SK-N-SH (cell line): ENCODE measurements at regions of chr19 and their contacts with region 1.

Region 1: DNA sequence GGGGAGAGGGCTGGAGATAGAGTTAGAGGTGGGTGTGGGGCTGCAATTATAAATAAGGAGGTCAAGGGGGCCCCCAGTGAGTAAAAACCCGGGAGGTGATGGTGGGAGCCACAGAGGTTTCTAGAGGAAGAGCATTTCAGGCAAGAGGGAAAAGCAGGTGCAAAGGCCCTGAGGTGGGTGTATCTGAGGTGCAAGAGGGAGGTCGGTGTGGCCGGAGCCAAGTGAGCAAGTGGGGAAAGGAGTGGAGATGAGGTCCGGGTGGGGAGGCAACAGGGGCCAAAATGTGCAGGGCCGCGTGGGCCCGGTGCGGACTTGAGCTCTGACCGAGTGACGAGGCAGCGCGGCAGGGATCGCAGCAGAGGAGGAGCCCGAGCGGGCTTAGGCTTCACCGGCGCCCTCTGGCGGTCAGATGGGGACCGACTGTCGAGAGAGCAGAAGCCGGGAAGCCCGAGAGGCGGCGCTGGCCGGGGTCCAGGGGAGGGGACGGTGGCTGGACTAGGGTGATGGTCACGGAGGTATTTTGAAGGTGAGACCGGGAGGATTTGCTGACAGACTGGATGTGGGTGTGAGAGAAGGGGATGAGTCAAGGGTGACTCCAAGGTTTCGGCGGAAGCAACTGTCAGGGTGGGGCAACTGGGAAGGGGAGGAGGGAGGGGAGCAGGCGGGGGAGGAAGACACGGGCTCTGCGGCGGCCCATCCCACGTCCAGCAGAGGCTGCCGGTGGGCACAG is 17.7 kb upstream of the SPACA4 start:
- DNase-seq: peak; percentile 92
- H3K4me3 ChIP-seq: peak overlapping the region; percentile 40 to 60
- H3K27ac ChIP-seq: no peak overlapping the region
- H3K4me1 ChIP-seq: no peaks in the 10 kb centered on the region; a peak in 1 of 4 replicates
- H3K27me3 ChIP-seq: no peaks in the 10 kb centered on the region
- CTCF ChIP-seq: peak; percentile 95
- EP300 ChIP-seq: no peak
- RAD21 ChIP-seq: peak; percentile 59

Region 2: GRCh38 chr19:48492925-48493717 is 95.7 kb before region 1 on chr19:
- CTCF ChIA-PET with region 1: interaction called, 230 read pairs
- POLR2A ChIA-PET with region 1: interaction called, 5 read pairs
- DNase-seq: peak; percentile 99
- H3K4me3 ChIP-seq: peak overlapping the region; percentile 58 to 61
- H3K27ac ChIP-seq: peak overlapping the region; percentile 68 to 78
- H3K4me1 ChIP-seq: peaks cover 13 to 14% of the 10 kb centered on the region in 2 experiments; a peak in 3 of 4 replicates
- H3K27me3 ChIP-seq: no peaks in the 10 kb centered on the region
- CTCF ChIP-seq: no peak
- EP300 ChIP-seq: no peak
- RAD21 ChIP-seq: no peak

Region 3: DNA sequence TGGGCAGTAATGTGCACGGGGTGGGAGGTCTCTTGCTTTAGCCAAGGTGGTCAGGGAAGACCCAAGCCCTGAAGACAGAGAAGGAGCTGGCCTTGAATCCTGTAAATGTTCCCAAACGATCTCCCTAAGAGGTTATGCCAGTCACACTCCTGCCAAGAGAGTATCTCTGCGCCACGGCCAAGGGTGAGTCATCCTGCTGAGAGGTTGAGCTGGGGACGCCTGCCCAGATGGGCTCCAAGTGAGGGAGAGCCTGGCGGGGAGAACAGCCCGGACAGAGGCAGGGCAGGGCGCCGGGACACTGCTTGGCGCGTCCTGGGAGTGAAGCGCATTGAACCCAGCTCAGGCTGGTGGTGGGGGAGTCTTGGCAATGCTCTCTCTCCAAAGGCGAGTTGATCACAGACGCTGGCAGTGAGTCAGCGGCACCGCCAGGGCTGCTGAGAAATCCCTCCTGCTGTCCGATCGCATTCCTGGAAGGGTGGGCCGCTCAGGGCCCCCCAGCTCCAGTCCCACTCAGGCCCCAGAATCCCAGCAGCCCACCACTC is 20.4 kb before region 1 on chr19:
- CTCF ChIA-PET with region 1: interaction called, 19 read pairs
- POLR2A ChIA-PET with region 1: no interaction called
- DNase-seq: peak; percentile 68
- H3K4me3 ChIP-seq: no peak overlapping the region
- H3K27ac ChIP-seq: peak overlapping the region; percentile 45 to 98; a peak in 3 of 4 replicates
- H3K4me1 ChIP-seq: peaks cover 7 to 13% of the 10 kb centered on the region in 2 experiments; a peak in 3 of 4 replicates
- H3K27me3 ChIP-seq: no peaks in the 10 kb centered on the region
- CTCF ChIP-seq: no peak
- EP300 ChIP-seq: peak in 1 of 2 experiments; percentile 57; a peak in 1 of 4 replicates
- RAD21 ChIP-seq: no peak

Region 4: DNA sequence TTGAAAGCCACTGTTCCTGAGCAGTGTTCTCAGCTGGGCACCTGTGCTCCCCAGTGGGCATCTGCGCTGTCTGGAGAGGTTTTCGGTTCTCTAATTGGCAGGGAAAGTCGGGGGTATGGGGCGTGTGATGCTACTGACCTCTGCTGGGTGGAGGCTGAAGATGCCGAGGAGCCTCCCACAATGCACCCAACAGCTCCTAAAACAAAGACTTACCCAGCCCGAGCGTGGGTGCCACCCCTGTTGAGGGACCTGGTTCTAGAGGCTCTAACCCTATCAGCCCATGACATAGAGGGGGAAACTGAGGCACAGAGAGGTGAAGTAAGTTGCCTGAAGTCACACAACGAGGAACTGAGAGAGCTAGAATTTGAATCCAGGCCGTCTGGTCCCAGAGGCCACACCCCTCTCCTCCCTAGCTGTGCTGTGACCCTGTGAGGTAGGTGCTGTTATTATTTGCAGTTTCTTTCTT is 20.0 kb after region 1 on chr19:
- CTCF ChIA-PET with region 1: interaction called, 72 read pairs
- POLR2A ChIA-PET with region 1: interaction called, 3 read pairs
- DNase-seq: peak; percentile 86
- H3K4me3 ChIP-seq: no peak overlapping the region
- H3K27ac ChIP-seq: no peak overlapping the region
- H3K4me1 ChIP-seq: peaks cover 0 to 5% of the 10 kb centered on the region in 2 experiments; a peak in 1 of 4 replicates
- H3K27me3 ChIP-seq: no peaks in the 10 kb centered on the region
- CTCF ChIP-seq: peak; percentile 64
- EP300 ChIP-seq: no peak
- RAD21 ChIP-seq: peak; percentile 71

Region 5: GRCh38 chr19:48646001-48646721 is 57.3 kb after region 1 on chr19 and contains the start of gene CA11:
- CTCF ChIA-PET with region 1: no interaction called
- POLR2A ChIA-PET with region 1: no interaction called
- DNase-seq: peak; percentile 96
- H3K4me3 ChIP-seq: peak within 1 kb of the TSS; percentile 43 to 74
- H3K27ac ChIP-seq: peak within 1 kb of the TSS; percentile 54 to 69
- H3K4me1 ChIP-seq: peaks cover 4 to 6% of the 10 kb centered on the region in 2 experiments; a peak in 2 of 4 replicates
- H3K27me3 ChIP-seq: no peaks in the 10 kb centered on the region
- CTCF ChIP-seq: peak; percentile 76
- EP300 ChIP-seq: no peak
- RAD21 ChIP-seq: peak; percentile 90
- polyA plus RNA-seq, gene CA11: 13.1 and 13.5 TPM in 2 replicates